ENCODE measurements at regions of chr5 and their contacts with region 1.

Region 1: GRCh38 chr5:87400305-87400899 is 12.3 kb downstream of the CCNH start:
- DNase-seq: no peak
- H3K4me3 ChIP-seq: no peak overlapping the region
- H3K4me3 Mint-ChIP-seq: no peak overlapping the region
- H3K27ac Mint-ChIP-seq: no peak overlapping the region
- H3K4me1 ChIP-seq: 0 out of 2 replicates have a peak, but pooled peaks cover 3% of the 10 kb centered on the region
- H3K4me1 Mint-ChIP-seq: no peaks in the 10 kb centered on the region
- H3K27me3 ChIP-seq: no peaks in the 10 kb centered on the region
- H3K27me3 Mint-ChIP-seq: no peaks in the 10 kb centered on the region
- CTCF ChIP-seq: peak; percentile 35 to 58

Region 2: DNA sequence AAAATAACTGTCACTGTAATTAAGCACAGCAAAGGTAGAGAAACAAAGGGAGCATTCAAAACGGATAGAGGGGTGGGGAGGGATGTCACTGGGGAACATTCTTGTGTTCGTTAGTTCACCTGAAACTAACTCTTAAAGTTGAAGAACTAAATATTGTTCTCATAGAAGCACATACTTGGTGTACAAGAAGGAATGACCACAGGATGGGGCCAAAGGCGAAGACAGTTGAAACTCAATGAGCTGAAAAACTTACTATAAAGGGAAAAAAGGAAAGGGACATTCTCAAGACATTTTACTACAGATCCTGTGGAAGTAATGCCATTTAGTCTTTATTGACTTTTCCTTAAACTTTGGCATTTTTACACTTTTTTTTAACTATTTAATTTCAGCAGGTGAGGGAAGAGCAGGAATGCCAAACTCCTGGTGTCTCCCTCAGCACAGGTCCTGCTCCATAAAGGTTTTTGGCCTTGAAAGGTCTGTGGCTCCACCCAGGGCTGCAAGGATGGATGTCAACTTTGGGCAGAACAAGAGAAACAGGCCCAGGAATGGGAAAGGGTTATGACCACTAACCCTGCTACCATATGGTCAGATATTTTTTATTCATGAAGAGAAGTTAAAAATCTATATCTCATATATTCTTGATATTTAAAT is 330.3 kb before region 1 on chr5:
- CTCF ChIA-PET with region 1: interaction called, 16 read pairs
- POLR2A ChIA-PET with region 1: no interaction called
- intact Hi-C with region 1: loop called (anchors 1 kb)
- DNase-seq: peak in 1 of 2 experiments; percentile 22
- H3K4me3 ChIP-seq: no peak overlapping the region
- H3K4me3 Mint-ChIP-seq: no peak overlapping the region
- H3K27ac Mint-ChIP-seq: no peak overlapping the region
- H3K4me1 ChIP-seq: no peaks in the 10 kb centered on the region
- H3K4me1 Mint-ChIP-seq: no peaks in the 10 kb centered on the region
- H3K27me3 ChIP-seq: no peaks in the 10 kb centered on the region
- H3K27me3 Mint-ChIP-seq: peaks cover 2% of the 10 kb centered on the region
- CTCF ChIP-seq: peak; percentile 22 to 30

Region 3: DNA sequence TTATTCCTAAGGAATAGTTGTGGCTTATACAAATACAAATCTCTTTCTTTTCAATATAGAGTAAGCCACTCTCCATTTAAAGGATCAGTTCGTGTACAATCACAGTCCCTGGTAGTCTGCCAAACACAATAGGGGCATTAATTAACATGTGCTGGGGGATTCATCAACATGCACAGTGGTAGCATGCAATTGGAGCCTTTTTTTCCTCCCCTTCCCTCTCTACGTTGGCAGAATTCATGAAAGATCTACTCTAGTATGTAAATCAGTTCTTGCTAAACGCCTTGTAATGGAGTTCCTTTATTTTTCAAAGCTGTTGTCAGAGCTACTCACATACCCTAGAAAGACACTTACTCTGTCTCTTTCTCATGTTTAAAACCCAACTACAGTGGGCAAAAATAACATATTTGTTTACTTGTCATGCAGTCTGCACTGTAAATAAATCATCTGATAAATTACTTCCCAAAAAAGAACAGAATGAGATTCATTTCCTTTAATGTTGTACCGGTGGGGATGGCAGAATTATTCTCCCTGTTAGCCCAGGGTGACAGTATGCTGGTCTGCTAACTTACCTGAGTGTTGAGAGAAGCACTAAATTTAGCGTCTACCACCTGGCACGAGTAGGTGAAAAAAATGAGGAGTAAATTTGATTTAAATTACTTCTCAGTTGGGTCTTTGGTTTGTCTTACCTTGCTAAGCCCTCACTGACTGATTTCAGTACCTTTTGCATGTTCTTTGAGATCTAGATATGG is 353.8 kb after region 1 on chr5:
- CTCF ChIA-PET with region 1: no interaction called
- POLR2A ChIA-PET with region 1: no interaction called
- intact Hi-C with region 1: no loop called
- DNase-seq: no peak
- H3K4me3 ChIP-seq: no peak overlapping the region
- H3K4me3 Mint-ChIP-seq: no peak overlapping the region
- H3K27ac Mint-ChIP-seq: no peak overlapping the region
- H3K4me1 ChIP-seq: 0 out of 2 replicates have a peak, but pooled peaks cover 3% of the 10 kb centered on the region
- H3K4me1 Mint-ChIP-seq: no peaks in the 10 kb centered on the region
- H3K27me3 ChIP-seq: no peaks in the 10 kb centered on the region
- H3K27me3 Mint-ChIP-seq: no peaks in the 10 kb centered on the region
- CTCF ChIP-seq: no peak

Measured in Caco-2 (cell line).